AG04450 (cell line): ENCODE measurements at regions of chr4 and their contacts with region 1.

Region 1: GRCh38 chr4:140757232-140757630 is 1.0 kb upstream of the TBC1D9 start:
- DNase-seq: no peak
- H3K4me3 ChIP-seq: peak overlapping the region; percentile 79
- H3K27ac ChIP-seq: peak overlapping the region; percentile 39
- H3K27me3 ChIP-seq: no peaks in the 10 kb centered on the region
- CTCF ChIP-seq: no peak

Region 2: GRCh38 chr4:140082391-140082755 is 674.9 kb before region 1 on chr4:
- CTCF ChIA-PET with region 1: no interaction called
- POLR2A ChIA-PET with region 1: interaction called, 10 read pairs
- DNase-seq: no peak
- H3K4me3 ChIP-seq: no peak overlapping the region; the same call in 1 of the 2 replicates
- H3K27ac ChIP-seq: peak overlapping the region; percentile 48
- H3K27me3 ChIP-seq: no peaks in the 10 kb centered on the region
- CTCF ChIP-seq: no peak

Region 3: DNA sequence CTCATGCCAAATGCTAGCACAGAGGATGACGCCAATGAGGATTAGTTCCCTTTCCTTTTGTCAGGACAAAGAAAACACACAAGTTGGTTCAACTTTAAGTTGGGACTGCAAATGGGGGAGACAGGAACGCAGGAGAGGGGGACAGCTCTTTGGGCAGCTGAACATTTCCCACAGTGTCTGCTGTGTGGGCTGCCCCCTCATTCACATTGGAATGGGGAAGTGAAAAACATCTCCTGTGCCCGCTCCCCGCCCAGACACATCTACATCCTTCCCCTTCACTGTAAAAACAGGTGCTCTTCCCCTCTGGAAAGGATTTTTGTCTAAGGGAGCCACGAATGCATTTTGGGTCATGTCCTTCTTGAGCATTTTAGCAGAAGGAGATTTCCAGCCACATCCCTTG is 43.4 kb after region 1 on chr4:
- CTCF ChIA-PET with region 1: no interaction called
- POLR2A ChIA-PET with region 1: no interaction called
- DNase-seq: no peak
- H3K4me3 ChIP-seq: no peak overlapping the region
- H3K27ac ChIP-seq: no peak overlapping the region
- H3K27me3 ChIP-seq: peaks cover 8% of the 10 kb centered on the region
- CTCF ChIP-seq: no peak